Activated CD4-positive, alpha-beta memory T cell treated with anti-CD3 and anti-CD28 coated beads, Interleukin-2, amount 10 ng/mL, durations not matched to agents 7 days and 5 days (primary cell): ENCODE measurements at regions of chr4 and their contacts with region 1.

Region 1: GRCh38 chr4:48329193-48329592 is 12.1 kb upstream of the SLAIN2 start:
- DNase-seq: no peak
- H3K4me3 Mint-ChIP-seq: no peak overlapping the region
- H3K27ac Mint-ChIP-seq: no peak overlapping the region
- H3K4me1 Mint-ChIP-seq: peaks cover 4% of the 10 kb centered on the region
- H3K27me3 Mint-ChIP-seq: peaks cover 15% of the 10 kb centered on the region

Region 2: DNA sequence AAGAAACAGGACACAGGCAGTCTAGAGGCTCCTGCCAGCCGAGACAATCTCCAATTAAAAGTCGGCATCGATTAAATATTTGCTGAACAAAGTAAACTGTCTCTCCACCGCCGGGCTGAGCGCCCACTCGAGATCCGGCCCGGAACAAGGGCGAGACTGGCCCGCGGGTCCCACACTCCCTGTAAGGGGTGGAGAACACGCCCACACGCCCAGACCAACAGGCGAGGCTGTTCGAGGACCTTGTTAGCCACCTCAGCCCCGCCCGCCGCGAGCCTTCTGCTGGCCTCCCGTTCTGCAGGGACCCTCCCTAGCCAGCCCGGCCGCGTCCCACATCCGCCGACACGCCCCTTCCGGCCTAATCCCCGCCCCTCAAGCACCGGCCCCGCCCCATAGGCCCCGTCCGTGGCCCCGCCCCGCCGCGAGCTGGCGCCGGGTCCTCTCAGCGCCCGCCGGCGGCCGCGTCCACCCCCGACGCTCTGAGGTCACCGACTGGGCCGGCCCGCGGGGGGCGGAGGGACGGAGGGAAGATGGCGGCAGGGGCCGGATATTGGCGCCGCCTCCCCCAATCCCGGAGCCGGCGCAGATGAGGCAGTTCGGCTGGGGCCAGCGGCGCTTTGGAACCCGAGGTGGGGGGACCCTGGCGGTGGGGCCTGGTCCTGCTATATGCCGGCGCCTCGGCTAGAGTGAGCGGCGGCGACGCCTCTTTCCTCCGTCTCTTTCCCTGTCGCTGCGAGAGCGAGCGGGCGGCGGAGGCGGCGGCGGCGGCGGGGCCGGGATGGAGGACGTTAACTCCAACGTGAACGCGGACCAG is 12.0 kb after region 1 on chr4 and contains the start of gene SLAIN2:
- CTCF ChIA-PET with region 1: no interaction called
- POLR2A ChIA-PET with region 1: interaction called, 14 read pairs
- DNase-seq: peak; percentile 98
- H3K4me3 Mint-ChIP-seq: peak within 1 kb of the TSS; percentile 97
- H3K27ac Mint-ChIP-seq: peak within 1 kb of the TSS; percentile 93
- H3K4me1 Mint-ChIP-seq: peaks cover 57% of the 10 kb centered on the region
- H3K27me3 Mint-ChIP-seq: no peaks in the 10 kb centered on the region
- total RNA-seq, gene SLAIN2: 62.4 to 66.2 TPM